Sigmoid colon (tissue), 7 donors: ENCODE measurements at regions of chr20 and their contacts with region 1.

Region 1: GRCh38 chr20:40689943-40690835 is 1.2 kb upstream of the MAFB start:
- DNase-seq: peak; percentile 95
- H3K4me3 ChIP-seq: peak overlapping the region; percentile 30 to 72 (median 55)
- H3K27ac ChIP-seq: peak overlapping the region; percentile 92 to 94 (median 93)
- H3K4me1 ChIP-seq: peaks cover 0 to 52% (median 36%) of the 10 kb centered on the region in 4 donors
- H3K27me3 ChIP-seq: peaks cover 25 to 50% (median 50%) of the 10 kb centered on the region in 3 donors
- CTCF ChIP-seq: peak; percentile 71 to 91 (median 80)
- EP300 ChIP-seq: no peak
- POLR2A ChIP-seq: peak in 1 of 2 donors; percentile 41

Region 2: DNA sequence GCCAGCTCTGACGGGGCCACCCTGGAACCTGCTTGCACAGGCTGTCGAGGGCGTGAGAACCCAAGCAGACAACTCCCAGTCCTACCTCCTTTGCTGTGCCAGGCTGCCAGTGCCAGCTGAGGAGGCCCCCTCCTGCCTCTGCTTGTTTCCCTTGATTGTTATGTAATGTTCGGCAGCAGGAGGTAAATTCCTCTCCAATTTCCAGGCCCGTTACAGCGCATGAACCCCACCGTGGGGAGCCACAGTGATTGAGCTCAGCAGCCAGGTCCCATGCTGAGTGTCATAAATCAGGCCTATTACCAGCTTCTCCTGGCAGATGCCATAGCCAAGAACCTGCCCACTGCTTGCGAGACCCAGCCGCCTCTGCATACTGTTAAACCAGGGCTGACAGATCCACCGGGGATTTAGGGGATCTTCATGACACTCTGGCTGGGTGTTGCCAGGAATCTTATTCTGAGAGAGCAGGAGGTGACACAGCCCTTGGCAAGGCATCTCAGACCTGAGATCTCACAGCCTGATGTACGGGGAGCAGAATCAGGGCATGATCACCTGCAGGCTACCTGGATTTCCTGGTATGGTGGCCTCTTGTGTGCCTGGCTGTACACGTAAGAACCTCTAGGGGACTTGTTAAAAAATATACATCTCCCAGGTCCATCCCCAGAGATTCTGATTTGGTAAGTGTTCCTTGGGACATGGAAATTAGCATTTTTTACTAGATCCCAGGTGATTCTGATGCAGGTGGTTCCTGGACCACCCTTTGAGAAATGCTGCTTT is 1407.4 kb before region 1 on chr20:
- intact Hi-C with region 1: loop called (anchors 5 kb)
- DNase-seq: peak; percentile 91
- H3K4me3 ChIP-seq: no peak overlapping the region
- H3K27ac ChIP-seq: peak overlapping the region in 2 of 4 donors; percentile 51 to 54
- H3K4me1 ChIP-seq: peaks cover 0 to 12% (median 6%) of the 10 kb centered on the region in 4 donors
- H3K27me3 ChIP-seq: no peaks in the 10 kb centered on the region
- CTCF ChIP-seq: no peak
- EP300 ChIP-seq: peak in 2 of 4 donors; percentile 15 to 69
- POLR2A ChIP-seq: no peak

Region 3: GRCh38 chr20:39986173-39986904 is 703.9 kb before region 1 on chr20:
- intact Hi-C with region 1: loop called (anchors 2 kb)
- DNase-seq: peak; percentile 92
- H3K4me3 ChIP-seq: no peak overlapping the region
- H3K27ac ChIP-seq: peak overlapping the region; percentile 66 to 86 (median 83)
- H3K4me1 ChIP-seq: peaks cover 0 to 33% (median 27%) of the 10 kb centered on the region in 4 donors
- H3K27me3 ChIP-seq: no peaks in the 10 kb centered on the region
- CTCF ChIP-seq: no peak
- EP300 ChIP-seq: peak in 3 of 4 donors; percentile 26 to 71 (median 44)
- POLR2A ChIP-seq: no peak

Region 4: GRCh38 chr20:40265825-40266533 is 424.2 kb before region 1 on chr20:
- intact Hi-C with region 1: loop called (anchors 5 kb)
- DNase-seq: no peak
- H3K4me3 ChIP-seq: no peak overlapping the region
- H3K27ac ChIP-seq: no peak overlapping the region
- H3K4me1 ChIP-seq: no peaks in the 10 kb centered on the region
- H3K27me3 ChIP-seq: no peaks in the 10 kb centered on the region
- CTCF ChIP-seq: no peak
- EP300 ChIP-seq: no peak
- POLR2A ChIP-seq: no peak

Region 5: GRCh38 chr20:40563296-40563944 is 126.8 kb before region 1 on chr20:
- intact Hi-C with region 1: loop called (anchors 5 kb)
- DNase-seq: no peak
- H3K4me3 ChIP-seq: no peak overlapping the region
- H3K27ac ChIP-seq: no peak overlapping the region
- H3K4me1 ChIP-seq: peaks cover 0 to 35% (median 27%) of the 10 kb centered on the region in 4 donors
- H3K27me3 ChIP-seq: no peaks in the 10 kb centered on the region
- CTCF ChIP-seq: no peak
- EP300 ChIP-seq: no peak
- POLR2A ChIP-seq: no peak